ENCODE measurements at regions of chr11 and their contacts with region 1.

Region 1: DNA sequence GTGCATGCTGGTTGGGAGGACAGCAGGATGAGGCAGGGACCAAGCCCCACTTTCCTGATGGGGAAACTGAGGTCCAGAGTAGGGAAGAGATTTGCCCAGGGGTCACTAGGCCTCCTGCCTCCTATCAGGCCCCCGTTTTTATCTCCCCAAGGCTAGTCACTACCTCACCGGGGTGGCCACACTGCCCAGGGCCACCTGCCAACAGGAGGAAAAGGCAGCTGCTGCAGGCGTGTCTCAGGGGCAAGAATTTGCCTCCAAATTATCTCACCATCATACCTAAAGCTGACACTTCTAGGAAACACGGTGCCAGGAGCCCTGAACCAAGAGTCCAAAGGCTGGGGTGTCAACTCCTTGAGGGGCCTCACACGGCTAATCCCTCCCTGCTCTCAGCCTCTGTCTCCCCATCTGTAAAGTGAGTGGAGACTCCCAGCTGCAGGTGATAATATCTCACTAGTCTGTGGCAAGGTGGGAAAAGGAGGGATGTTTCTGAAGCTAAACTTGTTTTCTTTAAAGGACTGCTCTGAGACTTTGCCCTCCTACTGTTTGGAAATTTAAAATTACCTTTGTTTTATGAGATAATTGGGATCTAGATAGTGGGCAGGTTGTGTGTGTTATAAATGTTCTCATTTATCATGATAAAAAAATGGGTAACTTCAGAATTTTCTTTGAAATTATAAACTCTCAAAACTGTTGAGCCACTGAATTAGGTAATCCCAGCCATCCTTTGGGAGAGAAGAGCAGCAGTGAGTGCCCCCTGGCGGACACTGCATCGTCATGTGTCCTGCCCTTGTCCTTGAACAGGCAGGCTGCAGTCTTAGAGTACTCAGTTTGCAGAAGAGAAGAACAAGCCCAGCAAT is 60.0 kb downstream of the MYO7A start:
- DNase-seq: peak; percentile 47 to 70
- ATAC-seq: peak; percentile 81 to 90
- H3K4me3 ChIP-seq: no peak overlapping the region
- H3K27ac ChIP-seq: no peak overlapping the region
- H3K4me1 ChIP-seq: no peaks in the 10 kb centered on the region
- H3K27me3 ChIP-seq: no peaks in the 10 kb centered on the region
- CTCF ChIP-seq: peak; percentile 71 to 85 (median 75)
- POLR2A ChIP-seq: no peak

Region 2: DNA sequence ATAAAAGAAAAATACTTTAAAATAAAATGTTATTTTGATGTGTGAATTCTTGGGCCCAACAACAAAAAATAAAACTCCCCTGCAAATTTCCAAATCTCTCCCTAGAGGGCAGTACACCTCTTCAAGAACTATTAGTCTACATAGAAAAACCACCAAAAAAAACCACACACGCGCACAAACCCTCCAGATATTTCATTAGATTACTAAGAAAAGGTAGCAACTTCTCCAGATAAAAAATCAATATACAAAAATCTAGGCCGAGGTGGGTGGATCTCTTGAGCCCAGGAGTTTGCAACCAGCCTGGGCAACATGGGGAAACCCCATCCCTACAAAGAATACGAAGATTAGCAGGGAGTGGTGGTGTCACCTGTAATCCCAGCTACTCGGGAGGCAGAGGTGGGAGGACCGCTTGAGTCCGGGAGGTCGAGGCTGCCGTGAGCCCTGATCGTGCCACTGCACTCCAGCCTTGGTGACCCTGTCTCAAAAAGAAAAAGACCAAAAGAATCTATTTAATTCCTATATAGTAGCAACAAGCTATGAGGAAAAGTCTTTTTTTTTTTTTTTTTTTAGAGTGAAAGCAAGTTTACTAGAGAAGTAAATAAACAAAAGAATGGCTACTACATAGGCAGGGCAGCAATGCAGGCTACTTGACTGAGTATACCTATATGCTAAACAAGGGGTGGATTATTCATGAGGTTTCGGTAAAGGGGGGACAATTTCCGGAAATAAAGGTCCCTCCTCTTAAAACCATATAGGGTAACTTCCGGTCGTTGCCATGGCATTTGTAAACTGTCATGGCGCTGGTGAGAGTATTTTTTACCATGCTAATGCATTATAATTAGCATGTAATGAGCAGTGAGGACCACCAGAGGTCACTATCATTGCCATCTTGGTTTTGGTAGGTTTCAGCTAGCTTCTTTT is 140.7 kb before region 1 on chr11:
- in situ Hi-C with region 1: loop called in 2 of 4 experiments (anchors 10 kb)
- intact Hi-C with region 1: loop called (anchors 2 kb)
- DNase-seq: peak; percentile 65 to 74
- ATAC-seq: peak; percentile 97 to 98
- H3K4me3 ChIP-seq: peak overlapping the region; percentile 42 to 52 (median 50)
- H3K27ac ChIP-seq: peak overlapping the region in 1 of 4 donors; percentile 6
- H3K4me1 ChIP-seq: peaks cover 3 to 5% of the 10 kb centered on the region in 2 donors
- H3K27me3 ChIP-seq: peaks cover 15 to 20% (median 16%) of the 10 kb centered on the region in 3 donors
- CTCF ChIP-seq: peak; percentile 55 to 65 (median 58)
- POLR2A ChIP-seq: no peak

Region 3: GRCh38 chr11:77127232-77127911 is 60.6 kb before region 1 on chr11:
- in situ Hi-C with region 1: loop called (anchors 5 to 10 kb)
- intact Hi-C with region 1: loop called (anchors 1 kb)
- DNase-seq: no peak
- ATAC-seq: peak; percentile 55 to 63
- H3K4me3 ChIP-seq: peak overlapping the region; percentile 34 to 65 (median 51)
- H3K27ac ChIP-seq: peak overlapping the region in 1 of 4 donors; percentile 3
- H3K4me1 ChIP-seq: peaks cover 9 to 17% of the 10 kb centered on the region in 2 donors
- H3K27me3 ChIP-seq: no peaks in the 10 kb centered on the region
- CTCF ChIP-seq: peak; percentile 93 to 98 (median 96)
- POLR2A ChIP-seq: no peak

Region 4: GRCh38 chr11:77400773-77401449 is 212.9 kb after region 1 on chr11:
- in situ Hi-C with region 1: no loop called
- intact Hi-C with region 1: no loop called
- DNase-seq: peak; percentile 75 to 86
- ATAC-seq: peak; percentile 98
- H3K4me3 ChIP-seq: no peak overlapping the region
- H3K27ac ChIP-seq: peak overlapping the region; percentile 68 to 82 (median 78)
- H3K4me1 ChIP-seq: peaks cover 44 to 62% of the 10 kb centered on the region in 2 donors
- H3K27me3 ChIP-seq: no peaks in the 10 kb centered on the region
- CTCF ChIP-seq: peak in 2 of 5 experiments; percentile 30 to 50
- POLR2A ChIP-seq: no peak

Region 5: DNA sequence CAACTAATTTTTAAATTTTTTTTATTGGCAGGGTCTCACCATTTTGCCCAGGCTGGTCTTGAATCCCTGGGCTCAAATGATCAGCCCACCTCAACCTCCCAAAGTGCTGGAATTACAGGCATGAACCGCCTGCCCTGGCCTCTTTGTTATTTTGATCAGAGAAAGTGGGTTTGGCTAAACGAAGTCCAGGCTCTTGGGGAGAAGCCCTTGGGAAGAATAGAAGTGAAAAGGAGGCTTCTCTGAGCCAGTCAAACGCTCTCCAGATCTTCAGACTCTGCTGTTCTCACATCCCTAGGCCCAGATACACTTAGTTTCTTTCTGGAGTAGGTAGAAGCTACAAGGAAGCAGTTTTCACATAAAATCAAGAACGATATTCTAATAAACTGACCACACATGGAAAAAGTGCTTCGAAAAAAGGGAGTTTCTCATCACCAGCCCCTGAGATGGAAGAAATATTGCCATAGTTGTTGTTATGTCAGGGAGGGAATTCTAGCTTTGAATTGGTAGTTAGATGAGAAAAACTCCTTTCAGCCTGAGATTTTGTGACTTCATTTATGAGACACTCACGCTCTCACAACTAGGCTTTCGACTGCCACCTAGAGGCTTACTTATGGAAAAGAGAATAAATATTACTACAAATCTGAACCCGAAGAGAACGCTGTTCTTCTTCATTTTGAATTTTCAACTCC is 360.0 kb after region 1 on chr11:
- in situ Hi-C with region 1: loop called in 2 of 4 experiments (anchors 10 kb)
- intact Hi-C with region 1: no loop called
- DNase-seq: no peak
- ATAC-seq: peak; percentile 61 to 77
- H3K4me3 ChIP-seq: no peak overlapping the region
- H3K27ac ChIP-seq: no peak overlapping the region
- H3K4me1 ChIP-seq: peaks cover 0 to 6% of the 10 kb centered on the region in 2 donors
- H3K27me3 ChIP-seq: no peaks in the 10 kb centered on the region
- CTCF ChIP-seq: peak; percentile 35 to 68 (median 61)
- POLR2A ChIP-seq: no peak

Region 6: DNA sequence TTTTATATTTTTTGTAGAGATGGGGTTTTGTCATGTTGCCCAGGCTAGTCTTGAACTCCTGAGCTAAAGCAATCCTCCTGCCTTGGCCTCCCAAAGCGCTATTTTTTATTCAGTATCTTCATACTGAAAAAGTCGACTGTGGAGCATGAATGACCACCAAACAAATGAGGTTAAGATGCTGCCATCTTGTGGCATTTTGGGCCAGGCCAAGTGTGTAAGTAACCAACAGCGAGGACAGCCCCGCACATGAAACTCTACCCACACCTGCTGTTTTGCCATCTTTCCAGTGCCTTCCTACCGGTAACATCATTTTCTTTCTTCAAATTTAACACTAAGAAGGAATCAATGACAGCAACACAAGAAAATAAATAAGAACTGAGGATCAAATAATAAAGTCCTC is 369.6 kb after region 1 on chr11:
- in situ Hi-C with region 1: loop called in 1 of 4 experiments (anchors 10 kb)
- intact Hi-C with region 1: no loop called
- DNase-seq: no peak
- ATAC-seq: no peak
- H3K4me3 ChIP-seq: no peak overlapping the region
- H3K27ac ChIP-seq: no peak overlapping the region
- H3K4me1 ChIP-seq: no peaks in the 10 kb centered on the region
- H3K27me3 ChIP-seq: no peaks in the 10 kb centered on the region
- CTCF ChIP-seq: peak in 1 of 5 experiments; percentile 8
- POLR2A ChIP-seq: no peak

Measured in gastrocnemius medialis (tissue), 4 donors.